OCI-LY7 (cell line): ENCODE measurements at regions of chr1 and their contacts with region 1.

Region 1: GRCh38 chr1:228515200-228515834 is 28.1 kb downstream of the RNF187 start:
- DNase-seq: peak; percentile 62
- H3K4me3 ChIP-seq: no peak overlapping the region
- H3K27ac ChIP-seq: no peak overlapping the region
- H3K4me1 ChIP-seq: peaks cover 5% of the 10 kb centered on the region
- CTCF ChIP-seq: peak; percentile 91

Region 2: GRCh38 chr1:228131766-228132165 is 383.6 kb before region 1 on chr1:
- CTCF ChIA-PET with region 1: no interaction called
- POLR2A ChIA-PET with region 1: no interaction called
- intact Hi-C with region 1: loop called (anchors 1 kb)
- DNase-seq: no peak
- H3K4me3 ChIP-seq: no peak overlapping the region
- H3K27ac ChIP-seq: no peak overlapping the region
- H3K4me1 ChIP-seq: peaks cover 12% of the 10 kb centered on the region
- CTCF ChIP-seq: no peak

Region 3: DNA sequence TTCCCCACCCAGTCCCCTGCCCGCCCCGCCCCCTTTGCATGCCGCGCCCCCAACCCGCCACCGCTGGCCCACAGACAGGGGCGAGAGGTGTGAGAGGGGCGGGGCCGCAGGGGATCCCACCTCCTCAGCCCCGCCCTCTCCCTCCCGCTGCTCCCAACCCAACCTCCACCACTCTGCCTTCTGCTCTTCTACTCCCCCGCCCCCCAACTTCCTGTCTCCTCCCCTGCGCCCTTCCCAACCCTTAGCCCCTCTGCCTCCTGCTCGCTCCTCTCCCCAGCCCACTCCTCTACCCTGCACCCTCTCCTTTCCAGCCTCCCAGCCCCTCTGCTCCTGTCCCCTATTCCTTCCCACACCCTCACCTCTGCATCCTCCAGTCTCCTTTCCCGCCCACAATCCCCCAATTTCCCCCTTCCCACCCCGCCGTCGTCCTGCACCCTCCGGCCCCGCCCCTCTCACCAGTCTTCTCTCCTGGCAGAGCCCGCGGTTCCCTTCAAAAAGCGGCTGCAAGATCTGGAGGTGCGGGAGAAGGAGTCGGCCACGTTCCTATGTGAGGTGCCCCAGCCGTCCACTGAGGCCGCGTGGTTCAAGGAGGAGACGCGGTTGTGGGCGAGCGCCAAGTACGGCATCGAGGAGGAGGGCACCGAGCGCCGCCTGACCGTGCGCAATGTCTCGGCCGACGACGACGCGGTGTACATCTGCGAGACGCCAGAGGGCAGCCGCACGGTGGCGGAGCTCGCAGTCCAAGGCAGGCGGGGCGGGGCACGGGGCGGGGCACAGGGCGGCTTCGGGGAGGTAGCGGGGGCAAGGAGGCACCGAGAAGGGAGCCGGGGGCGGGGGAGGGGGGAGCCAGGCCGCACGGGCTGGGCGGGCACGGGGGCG is 302.1 kb before region 1 on chr1:
- CTCF ChIA-PET with region 1: no interaction called
- POLR2A ChIA-PET with region 1: no interaction called
- intact Hi-C with region 1: loop called (anchors 5 kb)
- DNase-seq: peak; percentile 91
- H3K4me3 ChIP-seq: peak overlapping the region; percentile 65
- H3K27ac ChIP-seq: peak overlapping the region; percentile 52
- H3K4me1 ChIP-seq: peaks cover 4% of the 10 kb centered on the region
- CTCF ChIP-seq: peak; percentile 66

Region 4: DNA sequence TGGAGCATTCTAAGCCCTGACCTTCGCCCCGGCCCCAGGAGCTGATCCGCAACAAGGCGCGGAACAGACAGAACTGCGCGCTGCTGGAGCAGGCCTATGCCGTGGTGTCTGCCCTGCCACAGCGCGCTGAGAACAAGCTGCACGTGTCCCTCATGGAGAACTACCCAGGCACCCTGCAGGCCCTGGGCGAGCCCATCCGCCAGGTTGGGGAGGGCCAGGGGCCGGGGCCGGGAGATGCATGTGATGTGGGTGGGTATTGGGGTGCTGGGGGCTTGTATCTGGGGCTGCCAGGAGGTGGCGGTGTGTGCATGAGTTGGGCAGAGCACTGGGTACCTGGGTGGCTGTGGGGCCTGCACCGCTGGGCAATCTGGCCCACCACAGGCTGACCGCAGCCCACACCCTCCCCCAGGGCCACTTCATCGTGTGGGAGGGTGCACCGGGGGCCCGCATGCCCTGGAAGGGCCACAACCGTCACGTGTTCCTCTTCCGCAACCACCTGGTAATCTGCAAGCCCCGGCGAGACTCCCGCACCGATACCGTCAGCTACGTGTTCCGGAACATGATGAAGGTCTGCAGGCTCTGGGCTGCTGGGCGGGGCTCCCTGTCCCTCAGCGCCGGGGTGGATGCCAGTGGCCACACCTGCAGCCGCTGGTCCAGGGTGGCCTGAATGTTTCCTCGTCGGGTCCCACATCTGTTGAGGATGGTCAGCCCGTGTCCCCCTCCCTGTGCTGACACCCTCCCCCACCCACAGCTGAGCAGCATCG is 174.4 kb before region 1 on chr1:
- CTCF ChIA-PET with region 1: no interaction called
- POLR2A ChIA-PET with region 1: no interaction called
- intact Hi-C with region 1: loop called (anchors 5 kb)
- DNase-seq: peak; percentile 23
- H3K4me3 ChIP-seq: no peak overlapping the region
- H3K27ac ChIP-seq: no peak overlapping the region
- H3K4me1 ChIP-seq: no peaks in the 10 kb centered on the region
- CTCF ChIP-seq: peak; percentile 64

Region 5: DNA sequence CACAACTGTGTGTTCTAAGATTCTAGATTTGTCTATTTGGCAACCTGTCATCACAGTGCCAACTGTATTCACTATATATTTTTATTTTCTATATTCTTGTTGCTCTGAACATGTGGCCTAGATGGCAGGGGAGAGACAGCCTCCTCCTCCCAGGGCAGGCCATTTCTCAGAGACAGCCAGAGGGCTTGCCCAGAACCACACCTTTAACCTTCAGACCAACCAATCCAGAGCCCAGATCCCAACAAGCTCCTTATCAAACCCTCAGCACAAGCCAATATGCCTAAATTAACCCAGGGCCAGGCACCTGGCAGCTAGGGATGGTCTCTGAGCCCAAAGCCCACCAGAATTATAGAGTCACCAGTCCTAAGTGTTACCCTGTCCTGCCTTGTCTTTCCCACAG is 128.0 kb before region 1 on chr1:
- CTCF ChIA-PET with region 1: no interaction called
- POLR2A ChIA-PET with region 1: no interaction called
- intact Hi-C with region 1: loop called (anchors 5 kb)
- DNase-seq: no peak
- H3K4me3 ChIP-seq: no peak overlapping the region
- H3K27ac ChIP-seq: no peak overlapping the region
- H3K4me1 ChIP-seq: no peaks in the 10 kb centered on the region
- CTCF ChIP-seq: no peak

Region 6: GRCh38 chr1:228471762-228472398 is 43.4 kb before region 1 on chr1:
- CTCF ChIA-PET with region 1: no interaction called
- POLR2A ChIA-PET with region 1: interaction called, 3 read pairs
- intact Hi-C with region 1: loop called (anchors 1 kb)
- DNase-seq: peak; percentile 85
- H3K4me3 ChIP-seq: no peak overlapping the region
- H3K27ac ChIP-seq: no peak overlapping the region
- H3K4me1 ChIP-seq: peaks cover 3% of the 10 kb centered on the region
- CTCF ChIP-seq: peak; percentile 87